K562 (cell line): ENCODE measurements at regions of chr19 and their contacts with region 1.

Region 1: DNA sequence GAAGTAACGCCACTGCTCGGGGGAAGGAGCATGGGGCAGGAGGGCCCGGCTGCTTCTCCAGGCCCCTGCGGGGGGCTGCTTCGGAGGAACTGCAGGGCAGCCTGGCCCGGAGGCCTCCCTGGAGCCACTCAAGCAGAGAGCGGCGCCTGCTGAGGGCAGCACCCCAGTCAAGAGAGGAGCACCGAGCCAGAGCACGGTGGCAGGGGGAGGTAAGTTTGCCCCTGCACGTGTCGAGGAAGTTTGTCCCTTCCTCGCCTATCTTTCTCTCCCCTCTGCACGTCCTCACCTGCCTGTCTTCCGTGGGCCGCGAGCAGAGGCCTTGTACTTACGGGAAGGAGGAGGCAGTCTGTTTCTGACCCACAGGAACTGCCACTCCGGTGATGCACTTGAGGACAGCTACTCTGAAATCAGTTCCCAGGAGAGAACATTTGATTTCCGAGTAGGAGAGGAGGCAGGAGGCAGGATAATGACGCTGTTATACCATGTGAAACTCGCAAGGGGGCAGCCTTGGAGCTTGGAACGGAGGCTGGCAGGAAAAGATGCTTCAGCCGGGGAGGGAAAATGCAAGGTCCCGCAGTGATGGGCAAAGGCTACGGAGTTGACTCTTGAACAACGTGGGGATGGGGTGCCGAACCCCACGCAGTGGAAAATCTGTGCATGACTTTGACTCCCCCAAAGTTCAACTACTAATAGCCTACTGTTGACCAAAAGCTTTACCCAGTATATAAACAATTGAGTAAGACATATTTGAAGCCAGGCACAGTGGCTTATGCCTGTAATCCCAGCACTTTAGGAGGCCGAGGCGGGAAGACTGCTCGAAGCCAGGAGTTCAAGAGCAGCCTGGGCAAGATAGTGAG is 5.0 kb downstream of the FFAR1 start:
- DNase-seq: peak; percentile 76 to 89 (median 81)
- ATAC-seq: peak; percentile 82
- H3K4me3 ChIP-seq: no peak overlapping the region
- H3K27ac ChIP-seq: no peak overlapping the region
- H3K4me1 ChIP-seq: peaks cover 5 to 28% of the 10 kb centered on the region in 2 experiments; a peak in 4 of 5 replicates
- H3K27me3 ChIP-seq: peaks cover 3 to 7% of the 10 kb centered on the region in 2 experiments; a peak in 3 of 5 replicates
- CTCF ChIP-seq: peak; percentile 92 to 96 (median 93)
- EP300 ChIP-seq: no peak
- POLR2A ChIP-seq: no peak
- RAD21 ChIP-seq: peak; percentile 98

Region 2: GRCh38 chr19:35468637-35469036 is 116.0 kb after region 1 on chr19:
- CTCF ChIA-PET with region 1: interaction called, 34 read pairs
- POLR2A ChIA-PET with region 1: interaction called, 3 read pairs
- in situ Hi-C with region 1: no loop called
- intact Hi-C with region 1: loop called (anchors 1 kb)
- DNase-seq: peak in 3 of 4 experiments; percentile 45 to 51 (median 47)
- ATAC-seq: peak; percentile 88
- H3K4me3 ChIP-seq: no peak overlapping the region
- H3K27ac ChIP-seq: no peak overlapping the region
- H3K4me1 ChIP-seq: no peaks in the 10 kb centered on the region
- H3K27me3 ChIP-seq: peaks cover 34 to 37% of the 10 kb centered on the region in 2 experiments
- CTCF ChIP-seq: peak; percentile 57 to 81 (median 65)
- EP300 ChIP-seq: no peak
- POLR2A ChIP-seq: no peak
- RAD21 ChIP-seq: peak; percentile 85 to 89

Region 3: DNA sequence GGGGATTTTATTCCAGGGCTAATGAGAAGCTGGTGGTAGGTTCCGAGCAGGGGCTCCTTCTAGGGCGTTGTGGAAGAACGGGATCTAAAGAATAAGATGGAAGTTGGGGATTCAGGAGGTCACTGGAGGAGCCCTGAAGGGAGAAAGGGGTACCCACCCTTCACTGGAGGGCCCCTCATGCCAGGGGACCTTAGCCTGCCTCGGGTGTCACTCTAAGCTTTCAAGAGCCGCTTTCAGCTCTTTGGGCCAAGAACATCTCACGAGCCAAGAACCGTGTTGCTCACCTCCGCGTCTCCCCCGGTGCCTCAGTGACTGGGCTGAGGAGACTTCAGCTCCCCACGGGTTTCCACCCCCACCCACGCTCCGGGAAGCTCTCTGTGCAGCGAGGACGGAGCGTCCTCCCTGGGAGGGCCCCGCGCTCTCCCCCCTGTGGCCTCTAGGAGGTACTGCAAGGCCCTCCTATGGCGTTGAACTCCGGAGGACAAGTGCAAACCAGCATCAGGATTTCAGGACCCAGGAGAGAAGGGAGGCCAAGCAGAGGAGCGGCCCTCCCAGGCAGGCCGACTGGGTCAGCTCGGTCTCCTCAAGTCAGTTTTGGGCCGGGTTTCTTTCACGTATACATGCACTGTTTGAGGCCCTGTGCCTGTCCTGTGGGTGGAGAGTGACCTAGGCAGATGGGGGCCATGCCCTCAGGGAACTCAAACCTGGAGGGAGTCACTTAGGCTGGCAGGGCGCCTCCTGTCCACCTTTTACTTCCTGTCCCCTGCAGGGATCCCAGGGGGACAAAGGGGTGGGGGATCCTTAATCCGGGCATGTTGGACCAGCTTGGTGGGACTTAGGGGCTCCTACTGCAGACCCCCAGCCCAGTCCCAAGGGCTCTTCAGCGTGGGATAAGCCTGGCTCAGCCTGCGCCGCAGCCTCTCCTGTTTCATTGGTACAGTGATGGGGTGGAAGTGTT is 142.7 kb after region 1 on chr19:
- CTCF ChIA-PET with region 1: interaction called, 17 read pairs
- POLR2A ChIA-PET with region 1: interaction called, 3 read pairs
- in situ Hi-C with region 1: no loop called
- intact Hi-C with region 1: loop called (anchors 1 kb)
- DNase-seq: peak; percentile 78 to 94 (median 89)
- ATAC-seq: peak; percentile 97
- H3K4me3 ChIP-seq: no peak overlapping the region
- H3K27ac ChIP-seq: no peak overlapping the region
- H3K4me1 ChIP-seq: peaks cover 9 to 20% of the 10 kb centered on the region in 2 experiments; a peak in 4 of 5 replicates
- H3K27me3 ChIP-seq: peaks cover 32 to 78% of the 10 kb centered on the region in 2 experiments
- CTCF ChIP-seq: peak; percentile 89 to 94 (median 93)
- EP300 ChIP-seq: no peak
- POLR2A ChIP-seq: no peak
- RAD21 ChIP-seq: peak; percentile 72 to 87